B cell (primary cell): ENCODE measurements at regions of chr5 and their contacts with region 1.

Region 1: GRCh38 chr5:101045689-101046088 is 142.6 kb upstream of the ST8SIA4 start:
- DNase-seq: peak; percentile 47
- ATAC-seq: no peak
- H3K4me3 ChIP-seq: no peak overlapping the region
- H3K4me3 Mint-ChIP-seq: no peak overlapping the region
- H3K27ac ChIP-seq: no peak overlapping the region
- H3K27ac Mint-ChIP-seq: no peak overlapping the region
- H3K4me1 ChIP-seq: no peaks in the 10 kb centered on the region
- H3K4me1 Mint-ChIP-seq: no peaks in the 10 kb centered on the region
- H3K27me3 ChIP-seq: no peaks in the 10 kb centered on the region
- H3K27me3 Mint-ChIP-seq: no peaks in the 10 kb centered on the region
- CTCF ChIP-seq: peak; percentile 72

Region 2: GRCh38 chr5:99104538-99105132 is 1941.1 kb before region 1 on chr5:
- CTCF ChIA-PET with region 1: interaction called, 6 read pairs
- POLR2A ChIA-PET with region 1: no interaction called
- intact Hi-C with region 1: loop called (anchors 2 kb)
- DNase-seq: peak; percentile 30
- ATAC-seq: no peak
- H3K4me3 ChIP-seq: no peak overlapping the region
- H3K4me3 Mint-ChIP-seq: no peak overlapping the region
- H3K27ac ChIP-seq: no peak overlapping the region
- H3K27ac Mint-ChIP-seq: no peak overlapping the region
- H3K4me1 ChIP-seq: no peaks in the 10 kb centered on the region
- H3K4me1 Mint-ChIP-seq: no peaks in the 10 kb centered on the region
- H3K27me3 ChIP-seq: no peaks in the 10 kb centered on the region
- H3K27me3 Mint-ChIP-seq: peaks cover 14% of the 10 kb centered on the region
- CTCF ChIP-seq: peak; percentile 90

Region 3: GRCh38 chr5:100479079-100479688 is 566.5 kb before region 1 on chr5:
- CTCF ChIA-PET with region 1: no interaction called
- POLR2A ChIA-PET with region 1: no interaction called
- intact Hi-C with region 1: loop called (anchors 1 kb)
- DNase-seq: peak; percentile 27
- ATAC-seq: no peak
- H3K4me3 ChIP-seq: no peak overlapping the region
- H3K4me3 Mint-ChIP-seq: no peak overlapping the region
- H3K27ac ChIP-seq: no peak overlapping the region
- H3K27ac Mint-ChIP-seq: no peak overlapping the region
- H3K4me1 ChIP-seq: no peaks in the 10 kb centered on the region
- H3K4me1 Mint-ChIP-seq: no peaks in the 10 kb centered on the region
- H3K27me3 ChIP-seq: no peaks in the 10 kb centered on the region
- H3K27me3 Mint-ChIP-seq: no peaks in the 10 kb centered on the region
- CTCF ChIP-seq: peak; percentile 40

Region 4: GRCh38 chr5:100535060-100536005 is 510.4 kb before region 1 on chr5 and contains the start of gene FAM174A:
- CTCF ChIA-PET with region 1: no interaction called
- POLR2A ChIA-PET with region 1: no interaction called
- intact Hi-C with region 1: loop called (anchors 5 kb)
- DNase-seq: peak; percentile 97
- ATAC-seq: peak; percentile 91
- H3K4me3 ChIP-seq: peak within 1 kb of the TSS; percentile 57 to 84 (median 83)
- H3K4me3 Mint-ChIP-seq: peak within 1 kb of the TSS; percentile 91
- H3K27ac ChIP-seq: peak within 1 kb of the TSS; percentile 82 to 87
- H3K27ac Mint-ChIP-seq: peak within 1 kb of the TSS; percentile 95
- H3K4me1 ChIP-seq: peaks cover 17 to 19% of the 10 kb centered on the region in 2 donors
- H3K4me1 Mint-ChIP-seq: peaks cover 19% of the 10 kb centered on the region
- H3K27me3 ChIP-seq: no peaks in the 10 kb centered on the region
- H3K27me3 Mint-ChIP-seq: peaks cover 3% of the 10 kb centered on the region
- CTCF ChIP-seq: no peak
- total RNA-seq, gene FAM174A: 6.1 TPM in 2 replicates

Region 5: DNA sequence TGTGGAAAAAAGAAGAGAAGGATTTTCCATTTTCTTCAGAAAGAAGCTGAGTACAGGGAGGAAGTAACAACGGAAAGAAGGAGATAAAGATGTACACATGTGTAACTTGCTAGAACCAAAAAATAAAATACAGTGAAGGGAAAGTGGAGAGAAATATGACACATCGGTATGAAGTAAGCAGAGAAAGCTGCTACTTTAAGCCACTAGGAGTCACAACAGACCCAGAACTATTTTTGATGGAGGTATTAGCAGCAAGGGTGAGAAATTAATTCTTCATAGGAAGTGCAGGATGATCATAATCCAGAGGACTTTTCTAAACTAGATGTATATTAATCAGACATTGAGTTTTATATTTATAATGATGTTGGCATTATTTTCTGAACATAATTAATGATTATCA is 422.0 kb before region 1 on chr5:
- CTCF ChIA-PET with region 1: interaction called, 29 read pairs
- POLR2A ChIA-PET with region 1: no interaction called
- intact Hi-C with region 1: loop called (anchors 1 kb)
- DNase-seq: peak; percentile 47
- ATAC-seq: peak; percentile 45
- H3K4me3 ChIP-seq: no peak overlapping the region
- H3K4me3 Mint-ChIP-seq: no peak overlapping the region
- H3K27ac ChIP-seq: no peak overlapping the region
- H3K27ac Mint-ChIP-seq: no peak overlapping the region
- H3K4me1 ChIP-seq: no peaks in the 10 kb centered on the region
- H3K4me1 Mint-ChIP-seq: no peaks in the 10 kb centered on the region
- H3K27me3 ChIP-seq: no peaks in the 10 kb centered on the region
- H3K27me3 Mint-ChIP-seq: peaks cover 3% of the 10 kb centered on the region
- CTCF ChIP-seq: peak; percentile 78

Region 6: GRCh38 chr5:100777680-100778281 is 267.9 kb before region 1 on chr5:
- CTCF ChIA-PET with region 1: interaction called, 14 read pairs
- POLR2A ChIA-PET with region 1: no interaction called
- intact Hi-C with region 1: loop called (anchors 1 kb)
- DNase-seq: peak; percentile 79
- ATAC-seq: peak; percentile 62
- H3K4me3 ChIP-seq: peak overlapping the region in 2 of 5 experiments; percentile 5 to 28
- H3K4me3 Mint-ChIP-seq: peak overlapping the region; percentile 32
- H3K27ac ChIP-seq: peak overlapping the region; percentile 44 to 60
- H3K27ac Mint-ChIP-seq: peak overlapping the region; percentile 47
- H3K4me1 ChIP-seq: peaks cover 32 to 37% of the 10 kb centered on the region in 2 donors
- H3K4me1 Mint-ChIP-seq: peaks cover 52% of the 10 kb centered on the region
- H3K27me3 ChIP-seq: no peaks in the 10 kb centered on the region
- H3K27me3 Mint-ChIP-seq: no peaks in the 10 kb centered on the region
- CTCF ChIP-seq: no peak

Region 7: DNA sequence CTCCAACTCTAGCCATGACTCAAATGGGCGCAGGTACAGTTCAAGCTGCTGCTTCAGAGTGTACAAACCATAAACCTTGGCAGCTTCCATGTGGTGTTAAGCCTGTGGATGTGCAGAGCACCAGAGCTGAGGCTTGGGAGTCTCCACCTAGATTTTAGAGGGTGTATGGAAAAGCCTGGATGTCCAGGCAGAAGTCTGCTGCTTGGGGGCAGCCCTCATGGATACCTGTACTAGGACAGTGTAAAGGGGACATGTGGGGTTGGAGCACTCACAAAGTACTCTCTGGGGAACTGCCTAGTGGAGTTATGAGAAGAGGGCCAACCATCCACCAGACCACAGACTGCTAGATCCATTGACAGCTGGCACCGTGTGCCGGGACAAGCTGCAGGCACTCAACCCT is 130.9 kb after region 1 on chr5:
- CTCF ChIA-PET with region 1: no interaction called
- POLR2A ChIA-PET with region 1: no interaction called
- intact Hi-C with region 1: no loop called
- DNase-seq: no peak
- ATAC-seq: no peak
- H3K4me3 ChIP-seq: no peak overlapping the region
- H3K4me3 Mint-ChIP-seq: no peak overlapping the region
- H3K27ac ChIP-seq: no peak overlapping the region
- H3K27ac Mint-ChIP-seq: no peak overlapping the region
- H3K4me1 ChIP-seq: no peaks in the 10 kb centered on the region
- H3K4me1 Mint-ChIP-seq: no peaks in the 10 kb centered on the region
- H3K27me3 ChIP-seq: no peaks in the 10 kb centered on the region
- H3K27me3 Mint-ChIP-seq: no peaks in the 10 kb centered on the region
- CTCF ChIP-seq: no peak